Right ventricle myocardium inferior (tissue), 1 donor: ENCODE measurements at regions of chr16 and their contacts with region 1.

Region 1: DNA sequence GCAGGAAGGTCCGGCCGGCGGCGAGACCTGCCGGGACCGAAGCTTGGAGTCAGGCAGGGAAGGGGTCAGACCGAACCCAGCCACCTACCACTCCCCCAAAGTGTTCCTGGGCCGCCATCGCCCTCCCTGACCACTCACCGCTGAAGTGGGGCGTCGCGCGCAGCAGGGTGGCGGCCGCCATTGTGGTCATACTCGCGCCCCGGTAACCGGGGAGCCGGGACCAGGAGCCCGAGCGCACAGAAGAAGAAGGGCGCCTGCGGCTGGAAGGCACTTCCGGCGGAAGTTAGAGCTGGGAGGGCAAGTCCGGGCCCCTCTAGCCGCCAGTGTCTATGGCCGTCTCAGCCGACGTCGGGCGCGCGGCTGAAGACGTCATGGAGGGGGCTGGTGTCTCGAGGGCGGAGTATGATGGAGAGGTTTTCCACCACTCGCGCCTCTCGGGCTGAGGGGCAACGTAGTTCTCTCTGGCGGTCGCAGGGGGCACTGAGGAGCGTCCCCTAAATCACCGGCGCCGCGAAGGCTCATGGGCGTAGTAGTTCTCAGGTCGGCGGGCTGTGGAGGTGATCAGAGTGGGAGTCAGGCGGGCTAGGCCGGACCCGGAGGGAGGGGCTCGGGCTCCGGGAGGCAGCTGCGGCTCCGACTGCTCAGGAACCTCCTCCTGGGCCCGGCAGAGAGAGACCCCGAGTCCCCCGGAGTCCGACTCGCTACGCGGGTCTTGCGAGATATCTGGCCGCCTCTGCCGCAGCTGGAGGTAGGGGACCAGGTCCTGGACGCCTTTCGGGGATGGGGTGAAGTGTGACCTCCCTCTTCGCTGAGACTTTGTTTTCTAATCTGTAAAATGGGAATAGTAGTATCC is at the start of gene TUFM:
- DNase-seq: peak; percentile 99
- ATAC-seq: peak; percentile 98
- total RNA-seq, gene TUFM: 252 TPM

Region 2: DNA sequence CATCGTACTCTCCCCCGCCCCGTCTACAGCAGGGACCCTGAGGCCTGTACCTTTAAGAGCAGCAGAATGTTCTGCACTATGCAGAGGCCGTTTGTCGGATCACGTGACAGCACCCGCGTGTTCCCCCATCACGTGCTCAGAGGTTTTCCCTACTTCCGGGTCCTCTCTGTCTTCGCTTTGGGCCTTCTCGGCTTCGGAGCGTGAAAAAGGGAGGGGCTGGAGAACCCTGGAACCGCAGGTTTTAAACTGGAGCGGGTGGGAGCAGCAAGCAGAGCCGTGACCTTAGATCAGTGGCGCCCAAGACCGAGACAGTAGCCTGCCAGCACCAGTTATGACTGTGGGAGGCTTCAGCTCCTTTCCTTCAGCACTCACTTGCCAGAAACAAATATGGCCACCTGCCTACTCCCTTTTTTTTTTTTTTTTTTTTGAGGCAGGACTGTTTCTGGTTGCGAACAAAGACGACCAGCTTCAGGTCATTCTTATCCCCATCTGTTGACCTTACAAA is 354.3 kb before region 1 on chr16 and contains the start of gene CLN3:
- intact Hi-C with region 1: loop called (anchors 10 kb)
- DNase-seq: peak; percentile 94
- ATAC-seq: peak; percentile 98
- total RNA-seq, gene CLN3: 14.8 TPM

Region 3: DNA sequence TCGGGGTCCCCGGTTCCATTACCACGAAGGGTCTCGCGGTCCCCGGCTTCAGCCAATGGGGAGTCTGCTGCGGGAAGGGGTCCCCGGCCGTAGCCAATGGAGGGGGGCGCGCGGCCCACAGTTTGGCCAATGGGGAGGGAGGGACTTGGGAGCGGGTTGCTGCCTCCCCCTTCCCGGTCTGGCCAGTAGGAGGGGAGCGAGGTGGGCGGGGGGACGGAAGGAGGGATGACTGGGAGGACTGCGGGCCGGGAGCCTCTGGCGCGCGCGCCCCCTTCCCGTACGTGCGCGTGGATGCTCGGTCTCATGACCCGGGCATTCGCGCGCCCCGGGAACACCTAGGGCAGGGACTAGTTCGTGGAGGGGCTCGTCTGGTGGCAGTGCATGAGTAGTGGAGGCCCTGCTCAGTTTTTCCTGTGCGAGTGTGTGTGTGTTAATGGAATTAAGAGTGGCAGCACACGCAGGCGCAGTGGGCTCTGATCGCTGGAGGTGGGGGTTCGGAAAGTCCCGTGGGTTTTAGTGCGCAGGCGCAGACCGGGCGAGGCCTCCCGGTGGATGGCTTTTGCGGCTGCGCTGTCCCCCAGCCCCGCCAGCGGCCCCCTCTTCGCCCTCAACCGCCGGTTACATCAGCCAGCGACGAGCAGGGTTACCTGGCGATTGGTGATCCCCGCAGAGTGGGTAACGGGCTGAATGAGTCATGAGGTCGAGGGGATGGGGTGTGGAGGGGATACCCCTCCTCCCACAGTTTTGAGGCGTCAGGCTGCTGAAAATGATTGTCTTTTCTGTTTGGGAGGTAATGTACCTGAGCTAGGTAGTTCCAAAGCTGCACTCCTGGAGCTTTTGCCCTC is 22.2 kb before region 1 on chr16:
- intact Hi-C with region 1: loop called (anchors 1 kb)
- DNase-seq: peak; percentile 98
- ATAC-seq: peak; percentile 94

Region 4: DNA sequence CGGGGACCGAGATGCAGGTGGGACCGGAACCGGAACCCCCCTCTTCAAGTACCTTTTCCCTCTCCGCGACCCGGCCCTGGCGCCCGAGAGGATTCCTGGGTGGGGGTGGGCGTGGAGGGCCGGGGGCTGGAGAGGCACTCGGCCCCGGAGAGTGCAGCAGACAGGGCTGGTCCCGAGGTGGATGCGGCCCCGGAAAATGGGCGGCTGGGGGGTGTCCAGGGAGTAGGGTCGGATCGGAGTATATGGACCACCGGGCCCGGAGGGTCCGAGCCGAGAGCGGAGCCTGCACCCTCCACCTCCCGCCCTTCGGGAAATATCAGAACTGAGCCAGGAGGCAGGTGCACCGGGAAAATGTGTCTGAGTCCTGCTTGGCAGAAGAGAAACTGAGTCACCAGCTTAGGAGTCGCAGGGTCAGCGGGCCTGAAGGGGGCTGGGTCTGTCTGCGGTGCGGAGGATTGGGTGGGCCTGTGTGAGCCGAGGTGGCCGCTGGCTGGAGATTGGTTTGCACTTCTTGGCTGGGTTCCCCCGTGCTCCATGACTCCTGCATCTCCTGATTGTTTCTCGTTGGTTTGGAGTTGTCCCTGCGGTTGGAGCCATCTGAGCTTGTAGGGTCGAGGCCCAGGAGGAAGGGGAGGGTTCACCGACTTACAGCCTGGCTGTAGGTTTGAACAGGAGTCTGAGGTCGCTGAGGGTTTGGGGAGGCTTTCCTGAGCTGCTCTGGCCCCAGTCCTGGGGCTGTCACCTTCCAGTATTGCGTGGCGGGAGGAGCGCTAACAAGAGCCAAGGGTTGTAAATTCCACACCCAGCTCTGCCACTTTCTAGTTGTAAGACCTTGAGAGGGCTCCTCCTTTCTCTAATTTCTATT is 17.9 kb after region 1 on chr16:
- intact Hi-C with region 1: loop called (anchors 1 kb)
- DNase-seq: peak; percentile 62
- ATAC-seq: peak; percentile 1

Region 5: GRCh38 chr16:28924732-28925385 is 78.6 kb after region 1 on chr16 and contains the start of gene RABEP2:
- intact Hi-C with region 1: loop called (anchors 2 kb)
- DNase-seq: peak; percentile 96
- ATAC-seq: peak; percentile 95
- total RNA-seq, gene RABEP2: 22.3 TPM

Region 6: GRCh38 chr16:28943281-28943680 is 97.0 kb after region 1 on chr16:
- intact Hi-C with region 1: loop called (anchors 5 kb)
- DNase-seq: no peak
- ATAC-seq: no peak